Left ventricle myocardium inferior (tissue), 1 donor: ENCODE measurements at regions of chr3 and their contacts with region 1.

Region 1: DNA sequence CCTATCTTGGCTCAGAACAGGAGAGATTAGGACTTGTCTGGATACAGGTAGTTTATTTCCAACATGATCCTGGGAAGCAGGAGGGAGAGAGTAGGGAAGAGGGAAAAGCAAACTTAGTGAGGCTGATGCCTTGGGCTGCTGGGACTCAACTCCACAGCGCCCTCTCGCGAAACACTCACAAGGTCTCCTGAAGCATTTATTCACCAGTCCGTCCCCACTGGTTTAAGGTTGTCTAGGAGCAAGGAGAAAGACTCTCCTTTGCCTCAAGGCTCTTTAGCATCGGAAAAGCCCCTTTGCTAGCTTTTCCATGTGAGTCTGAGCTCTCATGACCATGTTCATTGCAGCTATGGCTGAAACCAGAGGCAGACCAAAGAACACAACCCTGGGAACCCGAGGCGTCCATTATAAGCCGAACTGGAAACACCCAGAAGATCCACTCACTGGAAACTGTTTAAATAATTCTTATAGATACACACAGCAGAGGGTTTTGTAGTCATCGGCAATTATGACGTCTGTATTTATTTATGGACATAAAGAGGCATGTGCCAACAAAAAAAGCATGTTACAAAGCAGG is 244.5 kb downstream of the CD47 start:
- DNase-seq: peak; percentile 55
- H3K4me3 ChIP-seq: no peak overlapping the region
- H3K27ac ChIP-seq: no peak overlapping the region
- H3K4me1 ChIP-seq: no peaks in the 10 kb centered on the region
- H3K27me3 ChIP-seq: peaks cover 4% of the 10 kb centered on the region
- CTCF ChIP-seq: peak; percentile 68

Region 2: GRCh38 chr3:107676469-107677309 is 169.7 kb before region 1 on chr3:
- intact Hi-C with region 1: loop called (anchors 10 kb)
- DNase-seq: no peak
- H3K4me3 ChIP-seq: no peak overlapping the region
- H3K27ac ChIP-seq: no peak overlapping the region
- H3K4me1 ChIP-seq: peaks cover 37% of the 10 kb centered on the region
- H3K27me3 ChIP-seq: no peaks in the 10 kb centered on the region
- CTCF ChIP-seq: peak; percentile 66